ENCODE measurements at regions of chr3 and their contacts with region 1.

Region 1: DNA sequence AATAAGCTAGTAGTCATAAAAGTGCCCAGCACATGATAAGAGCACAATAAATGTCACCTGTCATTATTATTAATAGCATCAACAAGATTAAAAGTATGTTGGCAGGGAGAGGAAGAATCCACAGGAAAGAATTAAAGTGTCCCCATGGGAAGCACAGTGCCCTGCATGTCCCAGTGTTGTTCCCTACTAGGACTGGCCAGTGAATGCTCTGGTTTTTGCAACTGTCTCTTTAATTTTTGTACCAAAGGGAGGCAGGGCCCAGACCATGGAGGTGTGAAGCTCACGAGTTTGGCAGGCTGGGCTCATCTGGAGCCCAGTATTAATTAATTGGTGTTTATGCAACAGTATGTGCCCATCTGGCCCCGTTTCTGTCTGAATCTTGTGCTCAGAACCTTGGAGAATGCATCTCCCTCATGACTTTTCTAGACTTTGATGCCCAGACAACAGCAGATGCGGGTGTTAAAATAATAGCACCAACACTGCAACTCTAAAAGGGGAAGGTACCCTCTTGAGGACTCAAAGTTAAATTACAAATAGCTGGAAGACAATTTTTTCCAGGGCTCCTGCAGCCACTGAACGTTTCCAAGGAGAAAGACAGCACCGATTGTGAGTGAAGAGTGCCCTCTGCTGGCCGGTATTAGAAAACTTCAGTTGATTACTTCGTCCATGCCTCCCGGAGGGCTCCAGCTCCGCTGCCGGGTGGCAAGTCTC is 71.9 kb upstream of the SPATA12 start:
- DNase-seq: no peak
- H3K4me3 ChIP-seq: no peak overlapping the region
- H3K27me3 ChIP-seq: peaks cover 11% of the 10 kb centered on the region
- CTCF ChIP-seq: peak; percentile 75

Region 2: GRCh38 chr3:56693750-56694149 is 294.9 kb before region 1 on chr3:
- CTCF ChIA-PET with region 1: interaction called, 14 read pairs
- POLR2A ChIA-PET with region 1: no interaction called
- DNase-seq: no peak
- H3K4me3 ChIP-seq: no peak overlapping the region
- H3K27me3 ChIP-seq: no peaks in the 10 kb centered on the region
- CTCF ChIP-seq: no peak

Region 3: GRCh38 chr3:56801662-56802377 is 186.8 kb before region 1 on chr3 and contains the start of gene ARHGEF3:
- CTCF ChIA-PET with region 1: interaction called, 98 read pairs
- POLR2A ChIA-PET with region 1: no interaction called
- DNase-seq: no peak
- H3K4me3 ChIP-seq: peak within 1 kb of the TSS; percentile 50
- H3K27me3 ChIP-seq: 0 out of 2 replicates have a peak, but pooled peaks cover 1% of the 10 kb centered on the region
- CTCF ChIP-seq: peak; percentile 49
- polyA plus RNA-seq, gene ARHGEF3: 2.0 and 2.1 TPM in 2 replicates

Region 4: GRCh38 chr3:57007513-57008460 is 19.2 kb after region 1 on chr3:
- CTCF ChIA-PET with region 1: interaction called, 13 read pairs
- POLR2A ChIA-PET with region 1: no interaction called
- DNase-seq: no peak
- H3K4me3 ChIP-seq: no peak overlapping the region
- H3K27me3 ChIP-seq: no peaks in the 10 kb centered on the region; the same call in 1 of the 2 replicates
- CTCF ChIP-seq: no peak

Measured in BJ (cell line).